ENCODE measurements at regions of chr21 and their contacts with region 1.

Region 1: DNA sequence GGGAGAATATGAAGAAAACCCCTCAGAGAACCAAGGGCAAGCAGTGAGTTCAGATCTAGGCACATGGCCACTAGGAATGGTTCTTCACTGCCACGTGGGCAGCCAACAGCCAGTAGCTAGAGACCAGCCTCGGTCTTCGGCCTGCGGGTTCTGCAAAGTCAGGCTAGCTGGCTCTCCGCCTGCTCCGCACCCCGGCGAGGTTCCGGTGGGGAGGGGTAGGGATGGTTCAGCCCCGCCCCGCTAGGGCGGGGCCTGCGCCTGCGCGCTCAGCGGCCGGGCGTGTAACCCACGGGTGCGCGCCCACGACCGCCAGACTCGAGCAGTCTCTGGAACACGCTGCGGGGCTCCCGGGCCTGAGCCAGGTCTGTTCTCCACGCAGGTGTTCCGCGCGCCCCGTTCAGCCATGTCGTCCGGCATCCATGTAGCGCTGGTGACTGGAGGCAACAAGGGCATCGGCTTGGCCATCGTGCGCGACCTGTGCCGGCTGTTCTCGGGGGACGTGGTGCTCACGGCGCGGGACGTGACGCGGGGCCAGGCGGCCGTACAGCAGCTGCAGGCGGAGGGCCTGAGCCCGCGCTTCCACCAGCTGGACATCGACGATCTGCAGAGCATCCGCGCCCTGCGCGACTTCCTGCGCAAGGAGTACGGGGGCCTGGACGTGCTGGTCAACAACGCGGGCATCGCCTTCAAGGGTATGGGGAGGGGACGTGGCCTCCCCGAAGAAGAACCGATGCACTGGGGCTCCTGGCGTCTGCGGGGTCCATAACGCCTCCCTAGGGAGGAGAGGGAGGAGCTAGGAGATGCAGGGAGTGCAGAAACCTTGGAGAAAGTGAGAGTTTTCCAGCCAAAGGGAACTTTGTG is at the start of gene CBR1:
- DNase-seq: peak; percentile 82
- ATAC-seq: peak; percentile 98
- H3K4me3 Mint-ChIP-seq: peak within 1 kb of the TSS; percentile 86
- H3K27ac Mint-ChIP-seq: peak within 1 kb of the TSS; percentile 48
- H3K4me1 Mint-ChIP-seq: peaks cover 52% of the 10 kb centered on the region
- H3K27me3 Mint-ChIP-seq: peaks cover 14% of the 10 kb centered on the region
- CTCF ChIP-seq: no peak
- total RNA-seq, gene CBR1: 167 to 172 TPM (median 170 TPM) in 3 replicates

Region 2: GRCh38 chr21:35861661-35862060 is 208.3 kb before region 1 on chr21:
- CTCF ChIA-PET with region 1: no interaction called
- POLR2A ChIA-PET with region 1: no interaction called
- DNase-seq: no peak
- ATAC-seq: no peak
- H3K4me3 Mint-ChIP-seq: no peak overlapping the region
- H3K27ac Mint-ChIP-seq: no peak overlapping the region
- H3K4me1 Mint-ChIP-seq: no peaks in the 10 kb centered on the region
- H3K27me3 Mint-ChIP-seq: no peaks in the 10 kb centered on the region
- CTCF ChIP-seq: no peak

Region 3: GRCh38 chr21:36087362-36088138 is 17.6 kb after region 1 on chr21:
- CTCF ChIA-PET with region 1: interaction called, 20 read pairs
- POLR2A ChIA-PET with region 1: interaction called, 3 read pairs
- DNase-seq: no peak
- ATAC-seq: peak; percentile 97
- H3K4me3 Mint-ChIP-seq: no peak overlapping the region
- H3K27ac Mint-ChIP-seq: 0 out of 2 replicates have a peak overlapping the region, but pooled peaks have one; percentile 15
- H3K4me1 Mint-ChIP-seq: peaks cover 18% of the 10 kb centered on the region
- H3K27me3 Mint-ChIP-seq: no peaks in the 10 kb centered on the region
- CTCF ChIP-seq: no peak; the same call in 1 of the 2 replicates

Region 4: GRCh38 chr21:36218691-36219090 is 148.7 kb after region 1 on chr21:
- CTCF ChIA-PET with region 1: no interaction called
- POLR2A ChIA-PET with region 1: no interaction called
- DNase-seq: no peak
- ATAC-seq: no peak
- H3K4me3 Mint-ChIP-seq: no peak overlapping the region
- H3K27ac Mint-ChIP-seq: no peak overlapping the region
- H3K4me1 Mint-ChIP-seq: no peaks in the 10 kb centered on the region
- H3K27me3 Mint-ChIP-seq: no peaks in the 10 kb centered on the region
- CTCF ChIP-seq: no peak

Measured in WTC11 (cell line).